Naive thymus-derived CD4-positive, alpha-beta T cell (primary cell): ENCODE measurements at regions of chr2 and their contacts with region 1.

Region 1: GRCh38 chr2:106085181-106085940 is 108.7 kb downstream of the UXS1 start:
- DNase-seq: peak in 7 of 9 donors; percentile 57 to 76 (median 70)
- ATAC-seq: peak; percentile 90
- H3K4me3 ChIP-seq: peak overlapping the region; percentile 6
- H3K4me3 Mint-ChIP-seq: peak overlapping the region; percentile 47 to 83 (median 69)
- H3K27ac ChIP-seq: peak overlapping the region; percentile 64
- H3K27ac Mint-ChIP-seq: peak overlapping the region; percentile 79 to 97 (median 93)
- H3K4me1 ChIP-seq: peaks cover 37 to 59% of the 10 kb centered on the region in 2 donors
- H3K4me1 Mint-ChIP-seq: peaks cover 27 to 97% (median 76%) of the 10 kb centered on the region in 7 donors
- H3K27me3 ChIP-seq: no peaks in the 10 kb centered on the region
- H3K27me3 Mint-ChIP-seq: peaks cover 0 to 6% (median 0%) of the 10 kb centered on the region in 5 donors

Region 2: DNA sequence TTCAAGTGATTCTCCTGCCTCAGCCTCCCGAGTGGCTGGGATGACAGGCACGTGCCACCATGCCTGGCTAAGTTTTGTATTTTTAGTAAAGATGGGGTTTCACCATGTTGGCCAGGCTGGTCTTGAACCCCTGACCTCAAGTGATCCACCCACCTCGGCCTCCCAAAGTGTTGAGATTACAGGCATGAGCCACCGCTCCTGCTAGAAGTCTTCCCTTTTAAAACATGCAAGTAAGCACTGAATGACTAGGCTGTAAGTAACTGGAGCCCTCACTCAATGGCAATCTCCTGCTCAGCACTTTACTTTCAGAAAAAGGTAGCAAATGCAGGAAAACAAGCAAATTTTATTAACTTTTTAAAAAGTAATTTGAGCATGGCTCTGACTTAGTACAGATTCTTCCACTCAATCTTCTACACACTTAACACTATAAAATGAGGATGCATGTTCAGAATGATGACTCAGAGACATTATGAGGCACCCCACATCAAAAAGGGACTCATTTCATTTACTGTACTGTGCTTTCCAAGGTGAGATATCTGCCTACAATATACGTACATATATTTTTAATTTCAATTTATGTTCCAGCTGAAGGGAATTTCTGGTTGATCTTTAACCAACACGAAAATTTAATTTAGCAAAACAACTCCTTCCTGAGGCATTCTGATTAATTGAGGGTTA is 347.2 kb before region 1 on chr2:
- CTCF ChIA-PET with region 1: interaction called, 3 read pairs
- POLR2A ChIA-PET with region 1: no interaction called
- intact Hi-C with region 1: loop called in 1 of 2 experiments (anchors 2 kb)
- DNase-seq: peak in 6 of 9 donors; percentile 56 to 77 (median 70)
- ATAC-seq: peak; percentile 88
- H3K4me3 ChIP-seq: peak overlapping the region; percentile 37
- H3K4me3 Mint-ChIP-seq: peak overlapping the region; percentile 54 to 84 (median 80)
- H3K27ac ChIP-seq: peak overlapping the region; percentile 74
- H3K27ac Mint-ChIP-seq: peak overlapping the region; percentile 90 to 99 (median 96)
- H3K4me1 ChIP-seq: peaks cover 40 to 41% of the 10 kb centered on the region in 2 donors
- H3K4me1 Mint-ChIP-seq: peaks cover 47 to 88% (median 83%) of the 10 kb centered on the region in 7 donors
- H3K27me3 ChIP-seq: no peaks in the 10 kb centered on the region
- H3K27me3 Mint-ChIP-seq: no peaks in the 10 kb centered on the region

Region 3: DNA sequence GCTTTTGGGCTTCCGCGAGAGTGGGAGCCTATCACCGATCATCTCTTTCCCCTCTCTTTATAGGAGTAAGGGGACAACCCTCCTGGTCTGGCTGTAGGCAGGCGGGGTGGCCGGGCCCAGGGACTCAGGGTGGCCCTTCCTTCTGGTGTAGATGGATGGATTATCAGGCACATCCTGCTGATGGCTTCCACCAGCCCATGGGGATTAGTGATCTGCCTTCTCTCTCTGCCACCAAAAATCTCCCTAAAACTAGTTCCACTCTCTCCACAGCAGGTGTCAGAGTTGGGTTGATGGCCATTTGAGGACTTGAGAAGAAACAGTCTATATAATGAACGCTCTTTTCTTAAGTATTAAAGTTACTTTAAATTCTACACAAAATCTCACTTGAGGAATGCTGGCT is 303.2 kb before region 1 on chr2:
- CTCF ChIA-PET with region 1: interaction called, 9 read pairs
- POLR2A ChIA-PET with region 1: no interaction called
- intact Hi-C with region 1: loop called in 1 of 2 experiments (anchors 1 kb)
- DNase-seq: peak in 1 of 9 donors; percentile 44
- ATAC-seq: peak; percentile 42
- H3K4me3 ChIP-seq: peak overlapping the region; percentile 52
- H3K4me3 Mint-ChIP-seq: peak overlapping the region; percentile 19 to 88 (median 78)
- H3K27ac ChIP-seq: peak overlapping the region; percentile 54
- H3K27ac Mint-ChIP-seq: peak overlapping the region; percentile 79 to 98 (median 91)
- H3K4me1 ChIP-seq: peaks cover 97 to 99% of the 10 kb centered on the region in 2 donors
- H3K4me1 Mint-ChIP-seq: peaks cover 70 to 97% (median 93%) of the 10 kb centered on the region in 7 donors
- H3K27me3 ChIP-seq: no peaks in the 10 kb centered on the region
- H3K27me3 Mint-ChIP-seq: no peaks in the 10 kb centered on the region

Region 4: GRCh38 chr2:105929516-105929915 is 155.8 kb before region 1 on chr2:
- CTCF ChIA-PET with region 1: interaction called, 6 read pairs
- POLR2A ChIA-PET with region 1: interaction called, 5 read pairs
- intact Hi-C with region 1: loop called (anchors 1 to 2 kb)
- DNase-seq: peak in 8 of 9 donors; percentile 31 to 79 (median 70)
- ATAC-seq: peak; percentile 72
- H3K4me3 ChIP-seq: no peak overlapping the region
- H3K4me3 Mint-ChIP-seq: peak overlapping the region in 9 of 10 donors; percentile 51 to 85 (median 64)
- H3K27ac ChIP-seq: peak overlapping the region; percentile 55
- H3K27ac Mint-ChIP-seq: peak overlapping the region; percentile 63 to 97 (median 90)
- H3K4me1 ChIP-seq: peaks cover 61 to 83% of the 10 kb centered on the region in 2 donors
- H3K4me1 Mint-ChIP-seq: peaks cover 48 to 76% (median 71%) of the 10 kb centered on the region in 7 donors
- H3K27me3 ChIP-seq: no peaks in the 10 kb centered on the region
- H3K27me3 Mint-ChIP-seq: no peaks in the 10 kb centered on the region

Region 5: GRCh38 chr2:106053116-106053515 is 32.2 kb before region 1 on chr2:
- CTCF ChIA-PET with region 1: interaction called, 4 read pairs
- POLR2A ChIA-PET with region 1: interaction called, 4 read pairs
- intact Hi-C with region 1: loop called in 1 of 2 experiments (anchors 2 kb)
- DNase-seq: peak in 5 of 9 donors; percentile 21 to 39 (median 33)
- ATAC-seq: peak; percentile 67
- H3K4me3 ChIP-seq: peak overlapping the region; percentile 28
- H3K4me3 Mint-ChIP-seq: peak overlapping the region in 9 of 10 donors; percentile 10 to 82 (median 74)
- H3K27ac ChIP-seq: no peak overlapping the region
- H3K27ac Mint-ChIP-seq: peak overlapping the region in 7 of 9 donors; percentile 17 to 77 (median 53)
- H3K4me1 ChIP-seq: peaks cover 45 to 64% of the 10 kb centered on the region in 2 donors
- H3K4me1 Mint-ChIP-seq: peaks cover 44 to 83% (median 76%) of the 10 kb centered on the region in 7 donors
- H3K27me3 ChIP-seq: no peaks in the 10 kb centered on the region
- H3K27me3 Mint-ChIP-seq: peaks cover 0 to 5% (median 0%) of the 10 kb centered on the region in 5 donors